ENCODE measurements at regions of chr19 and their contacts with region 1.

Region 1: GRCh38 chr19:8005534-8006256 is at the start of gene ELAVL1:
- DNase-seq: peak; percentile 92
- ATAC-seq: peak; percentile 94
- H3K4me3 Mint-ChIP-seq: peak within 1 kb of the TSS; percentile 89
- H3K27ac Mint-ChIP-seq: peak within 1 kb of the TSS; percentile 81
- H3K4me1 Mint-ChIP-seq: peaks cover 38% of the 10 kb centered on the region
- H3K27me3 Mint-ChIP-seq: no peaks in the 10 kb centered on the region
- CTCF ChIP-seq: no peak
- total RNA-seq, gene ELAVL1: 83.5 and 87.1 TPM in 2 replicates

Region 2: GRCh38 chr19:7562646-7563393 is 442.9 kb before region 1 on chr19:
- CTCF ChIA-PET with region 1: interaction called, 12 read pairs
- POLR2A ChIA-PET with region 1: no interaction called
- intact Hi-C with region 1: loop called (anchors 1 kb)
- DNase-seq: no peak
- ATAC-seq: no peak
- H3K4me3 Mint-ChIP-seq: no peak overlapping the region
- H3K27ac Mint-ChIP-seq: no peak overlapping the region
- H3K4me1 Mint-ChIP-seq: no peaks in the 10 kb centered on the region
- H3K27me3 Mint-ChIP-seq: no peaks in the 10 kb centered on the region
- CTCF ChIP-seq: no peak

Region 3: GRCh38 chr19:7652061-7652641 is 353.5 kb before region 1 on chr19:
- CTCF ChIA-PET with region 1: no interaction called
- POLR2A ChIA-PET with region 1: no interaction called
- intact Hi-C with region 1: loop called (anchors 5 kb)
- DNase-seq: peak; percentile 82
- ATAC-seq: peak; percentile 87
- H3K4me3 Mint-ChIP-seq: peak overlapping the region; percentile 78
- H3K27ac Mint-ChIP-seq: peak overlapping the region; percentile 41
- H3K4me1 Mint-ChIP-seq: peaks cover 8% of the 10 kb centered on the region
- H3K27me3 Mint-ChIP-seq: no peaks in the 10 kb centered on the region
- CTCF ChIP-seq: peak; percentile 81

Region 4: GRCh38 chr19:7852851-7853769 is 152.6 kb before region 1 on chr19:
- CTCF ChIA-PET with region 1: no interaction called
- POLR2A ChIA-PET with region 1: no interaction called
- intact Hi-C with region 1: loop called (anchors 2 kb)
- DNase-seq: peak; percentile 68
- ATAC-seq: peak; percentile 89
- H3K4me3 Mint-ChIP-seq: no peak overlapping the region
- H3K27ac Mint-ChIP-seq: no peak overlapping the region
- H3K4me1 Mint-ChIP-seq: peaks cover 4% of the 10 kb centered on the region
- H3K27me3 Mint-ChIP-seq: no peaks in the 10 kb centered on the region
- CTCF ChIP-seq: peak; percentile 73

Region 5: GRCh38 chr19:7925171-7925851 is 80.4 kb before region 1 on chr19:
- CTCF ChIA-PET with region 1: interaction called, 6 read pairs
- POLR2A ChIA-PET with region 1: interaction called, 6 read pairs
- intact Hi-C with region 1: loop called (anchors 5 kb)
- DNase-seq: peak; percentile 75
- ATAC-seq: peak; percentile 8
- H3K4me3 Mint-ChIP-seq: peak overlapping the region; percentile 84
- H3K27ac Mint-ChIP-seq: no peak overlapping the region
- H3K4me1 Mint-ChIP-seq: peaks cover 30% of the 10 kb centered on the region
- H3K27me3 Mint-ChIP-seq: peaks cover 1% of the 10 kb centered on the region
- CTCF ChIP-seq: peak; percentile 29

Region 6: GRCh38 chr19:8050274-8051096 is 44.8 kb after region 1 on chr19:
- CTCF ChIA-PET with region 1: no interaction called
- POLR2A ChIA-PET with region 1: interaction called, 6 read pairs
- intact Hi-C with region 1: loop called (anchors 5 kb)
- DNase-seq: peak; percentile 88
- ATAC-seq: peak; percentile 97
- H3K4me3 Mint-ChIP-seq: peak overlapping the region; percentile 68
- H3K27ac Mint-ChIP-seq: peak overlapping the region; percentile 30
- H3K4me1 Mint-ChIP-seq: peaks cover 16% of the 10 kb centered on the region
- H3K27me3 Mint-ChIP-seq: peaks cover 4% of the 10 kb centered on the region
- CTCF ChIP-seq: no peak